ENCODE measurements at regions of chr3 and their contacts with region 1.

Region 1: GRCh38 chr3:156509189-156510174 is 45.4 kb downstream of the SSR3 start:
- DNase-seq: no peak
- ATAC-seq: peak; percentile 58
- H3K4me3 Mint-ChIP-seq: no peak overlapping the region
- H3K27ac Mint-ChIP-seq: no peak overlapping the region
- H3K4me1 Mint-ChIP-seq: peaks cover 15% of the 10 kb centered on the region
- H3K27me3 Mint-ChIP-seq: peaks cover 13% of the 10 kb centered on the region

Region 2: DNA sequence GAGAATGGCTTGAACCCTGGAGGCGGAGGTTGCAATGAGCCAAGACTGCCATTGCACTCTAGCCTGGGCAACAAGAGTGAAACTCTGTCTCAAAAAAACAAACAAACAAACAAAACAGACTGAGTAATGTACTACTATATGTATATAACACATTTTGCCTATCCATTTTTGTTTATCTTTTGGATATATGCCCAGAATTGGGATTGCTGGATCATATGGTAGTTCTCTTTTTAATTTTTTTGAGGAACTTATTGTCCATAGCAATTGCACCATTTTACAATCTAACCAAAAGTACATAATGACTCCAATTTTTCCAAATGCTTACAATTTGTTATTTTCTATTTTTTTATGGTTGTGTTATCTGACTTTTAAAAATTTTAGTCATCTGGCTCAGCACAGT is 591.7 kb before region 1 on chr3:
- CTCF ChIA-PET with region 1: no interaction called
- POLR2A ChIA-PET with region 1: no interaction called
- intact Hi-C with region 1: no loop called
- DNase-seq: no peak
- ATAC-seq: no peak
- H3K4me3 Mint-ChIP-seq: no peak overlapping the region
- H3K27ac Mint-ChIP-seq: no peak overlapping the region
- H3K4me1 Mint-ChIP-seq: no peaks in the 10 kb centered on the region
- H3K27me3 Mint-ChIP-seq: no peaks in the 10 kb centered on the region

Region 3: GRCh38 chr3:156040041-156040440 is 469.4 kb before region 1 on chr3:
- CTCF ChIA-PET with region 1: no interaction called
- POLR2A ChIA-PET with region 1: no interaction called
- intact Hi-C with region 1: loop called (anchors 5 to 10 kb)
- DNase-seq: no peak
- ATAC-seq: no peak
- H3K4me3 Mint-ChIP-seq: no peak overlapping the region
- H3K27ac Mint-ChIP-seq: no peak overlapping the region
- H3K4me1 Mint-ChIP-seq: no peaks in the 10 kb centered on the region
- H3K27me3 Mint-ChIP-seq: peaks cover 5% of the 10 kb centered on the region

Region 4: DNA sequence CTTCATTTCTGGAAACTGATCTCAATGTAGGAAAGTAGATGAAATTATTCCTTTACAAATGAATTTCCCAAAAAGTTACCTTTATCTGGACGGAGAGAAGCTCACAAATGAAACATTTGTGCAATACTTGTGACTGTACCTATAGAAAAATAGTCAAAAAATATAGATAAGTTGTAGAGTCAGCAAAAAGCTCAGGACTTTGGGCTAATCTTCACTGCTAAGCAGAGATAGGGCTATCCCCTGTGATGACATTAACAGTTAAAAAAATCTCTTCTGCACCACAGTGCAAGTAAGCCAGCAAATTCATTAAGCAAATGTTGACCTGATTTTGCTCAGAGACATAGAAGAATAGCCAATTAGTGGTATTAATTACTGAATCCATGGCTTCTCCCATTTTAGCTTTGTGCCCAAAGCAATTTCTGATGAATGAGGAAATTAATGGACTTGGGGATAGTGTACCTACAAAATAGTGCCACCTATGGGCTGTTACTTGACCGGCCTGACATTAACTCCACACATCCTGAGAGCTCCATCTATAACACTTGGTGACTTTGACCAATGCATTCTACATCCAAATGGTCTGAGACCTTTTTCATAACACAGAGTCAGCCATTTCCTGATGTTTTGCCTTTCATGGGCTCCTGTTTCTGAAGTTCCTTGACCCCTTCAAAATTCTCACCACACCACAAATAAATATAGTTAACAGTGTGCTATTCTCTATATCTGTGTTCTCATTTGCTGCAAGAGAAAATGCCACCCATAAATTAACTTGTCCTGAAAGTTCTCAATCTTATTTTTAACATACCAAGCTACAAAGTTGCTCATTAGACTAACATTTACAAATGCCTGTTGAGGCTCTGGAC is 59.5 kb before region 1 on chr3:
- CTCF ChIA-PET with region 1: interaction called, 5 read pairs
- POLR2A ChIA-PET with region 1: interaction called, 4 read pairs
- intact Hi-C with region 1: loop called (anchors 1 kb)
- DNase-seq: no peak
- ATAC-seq: no peak
- H3K4me3 Mint-ChIP-seq: no peak overlapping the region
- H3K27ac Mint-ChIP-seq: no peak overlapping the region
- H3K4me1 Mint-ChIP-seq: no peaks in the 10 kb centered on the region
- H3K27me3 Mint-ChIP-seq: peaks cover 7% of the 10 kb centered on the region

Region 5: GRCh38 chr3:156483961-156484787 is 25.3 kb before region 1 on chr3:
- CTCF ChIA-PET with region 1: interaction called, 8 read pairs
- POLR2A ChIA-PET with region 1: no interaction called
- intact Hi-C with region 1: loop called in 1 of 2 experiments (anchors 1 kb)
- DNase-seq: peak; percentile 63
- ATAC-seq: peak; percentile 76
- H3K4me3 Mint-ChIP-seq: peak overlapping the region; percentile 69
- H3K27ac Mint-ChIP-seq: peak overlapping the region; percentile 92
- H3K4me1 Mint-ChIP-seq: peaks cover 35% of the 10 kb centered on the region
- H3K27me3 Mint-ChIP-seq: no peaks in the 10 kb centered on the region

Region 6: DNA sequence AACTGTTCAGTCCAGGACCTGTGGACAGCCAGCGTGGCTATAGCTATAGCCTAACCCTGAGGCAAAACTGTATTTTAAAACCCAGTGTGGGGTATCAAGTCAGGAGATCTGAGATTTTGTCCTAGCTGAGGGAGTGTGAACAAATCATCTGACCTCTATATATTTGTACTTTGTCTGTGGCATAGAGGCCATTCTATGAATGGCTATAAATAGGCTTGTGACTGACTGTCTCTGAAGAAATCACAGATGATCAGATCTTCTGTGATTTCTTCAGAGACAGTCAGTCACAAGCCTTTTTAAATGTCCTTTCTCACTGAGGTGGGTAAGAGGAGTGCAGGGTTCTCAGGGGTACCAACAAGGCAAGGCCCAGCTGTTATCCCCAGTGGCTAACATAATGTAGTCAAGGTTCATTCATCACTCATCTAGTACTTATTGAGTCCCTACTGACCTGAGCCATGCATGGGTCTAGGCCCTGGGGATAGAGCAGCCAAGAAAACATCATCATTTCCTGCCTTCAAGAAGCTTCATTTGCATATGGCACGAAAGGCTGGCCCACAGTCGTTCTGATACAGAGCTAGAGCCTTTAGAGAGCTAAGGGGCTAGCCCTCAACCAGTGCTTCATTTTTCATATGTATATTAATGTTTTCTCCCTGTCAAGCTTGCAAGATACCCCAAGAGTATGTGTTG is 218.2 kb after region 1 on chr3:
- CTCF ChIA-PET with region 1: no interaction called
- POLR2A ChIA-PET with region 1: interaction called, 12 read pairs
- intact Hi-C with region 1: no loop called
- DNase-seq: no peak
- ATAC-seq: no peak
- H3K4me3 Mint-ChIP-seq: no peak overlapping the region
- H3K27ac Mint-ChIP-seq: no peak overlapping the region
- H3K4me1 Mint-ChIP-seq: peaks cover 10% of the 10 kb centered on the region
- H3K27me3 Mint-ChIP-seq: no peaks in the 10 kb centered on the region